Activated CD4-positive, alpha-beta T cell treated with anti-CD3 and anti-CD28 coated beads for 36 hours (primary cell): ENCODE measurements at regions of chr3 and their contacts with region 1.

Region 1: DNA sequence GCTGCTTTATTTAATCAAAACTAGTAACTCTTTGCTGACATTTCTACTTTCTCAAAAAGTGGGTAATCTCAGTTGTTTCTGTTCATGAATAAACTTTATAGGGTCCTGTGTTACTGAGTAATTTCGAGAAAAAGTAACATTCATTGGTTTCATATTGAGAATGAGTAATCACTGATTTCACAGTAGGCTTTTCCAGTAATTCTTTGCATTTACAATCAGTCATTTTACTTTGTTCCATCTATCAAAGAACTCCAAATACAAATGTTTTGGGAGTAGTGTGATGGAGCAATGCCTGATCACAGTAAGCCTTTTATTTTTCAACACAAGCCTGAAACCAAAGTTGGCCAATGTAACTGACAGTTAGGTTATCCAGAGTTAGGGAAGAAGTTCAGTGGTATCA is 353.6 kb downstream of the ULK4 start:
- DNase-seq: no peak
- ATAC-seq: peak; percentile 84
- H3K4me3 Mint-ChIP-seq: peak overlapping the region; percentile 23
- H3K27ac Mint-ChIP-seq: peak overlapping the region; percentile 73
- H3K4me1 Mint-ChIP-seq: peaks cover 18% of the 10 kb centered on the region
- H3K27me3 Mint-ChIP-seq: no peaks in the 10 kb centered on the region

Region 2: DNA sequence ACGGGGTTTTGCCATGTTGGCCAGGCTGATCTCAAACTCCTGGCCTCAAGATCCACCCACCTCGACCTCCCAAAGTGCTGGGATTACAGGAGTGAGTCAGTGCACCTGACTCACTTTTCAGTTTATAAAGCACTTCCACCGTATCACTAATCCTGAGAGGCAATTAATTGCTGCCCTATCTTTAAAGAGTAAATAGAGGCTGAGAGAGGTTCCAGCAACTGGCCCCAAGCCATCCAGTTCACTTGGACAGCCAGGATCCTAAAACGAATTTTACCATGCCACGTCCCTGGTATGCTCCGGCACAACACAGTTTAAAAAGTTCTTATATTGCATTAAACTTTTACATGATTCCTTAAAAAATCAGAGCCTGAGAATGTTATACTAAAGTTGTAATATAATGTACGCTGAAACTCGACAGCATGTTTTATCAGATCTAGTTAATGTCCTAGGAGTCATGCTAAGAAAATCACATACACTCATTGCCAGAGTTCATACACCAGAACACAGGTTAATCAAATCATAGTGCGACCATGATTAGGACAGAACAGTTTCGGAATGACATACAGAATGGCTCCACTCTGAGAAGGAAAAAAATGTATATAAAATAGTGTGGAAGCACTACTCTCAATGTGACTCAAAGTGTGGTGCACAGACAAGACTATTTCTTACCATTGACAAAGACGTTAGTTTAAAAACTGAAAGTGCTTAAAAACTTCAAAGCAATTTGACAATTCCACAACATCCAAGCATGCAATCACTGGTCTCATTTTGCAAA is 228.2 kb after region 1 on chr3:
- CTCF ChIA-PET with region 1: no interaction called
- POLR2A ChIA-PET with region 1: no interaction called
- intact Hi-C with region 1: loop called (anchors 1 to 2 kb)
- DNase-seq: peak; percentile 32
- ATAC-seq: peak; percentile 90
- H3K4me3 Mint-ChIP-seq: no peak overlapping the region
- H3K27ac Mint-ChIP-seq: peak overlapping the region; percentile 13
- H3K4me1 Mint-ChIP-seq: peaks cover 20% of the 10 kb centered on the region
- H3K27me3 Mint-ChIP-seq: no peaks in the 10 kb centered on the region